Activated CD4-positive, alpha-beta T cell treated with anti-CD3 and anti-CD28 coated beads, Interleukin-2, amount 10 ng/mL, durations not matched to agents 7 days and 5 days (primary cell): ENCODE measurements at regions of chr10 and their contacts with region 1.

Region 1: GRCh38 chr10:69202332-69202731 is 17.8 kb upstream of the HKDC1 start:
- DNase-seq: no peak
- H3K4me3 Mint-ChIP-seq: no peak overlapping the region
- H3K27ac Mint-ChIP-seq: peak overlapping the region; percentile 80
- H3K4me1 Mint-ChIP-seq: peaks cover 51% of the 10 kb centered on the region
- H3K27me3 Mint-ChIP-seq: no peaks in the 10 kb centered on the region

Region 2: GRCh38 chr10:69217119-69217754 is 14.9 kb after region 1 on chr10:
- CTCF ChIA-PET with region 1: interaction called, 15 read pairs
- POLR2A ChIA-PET with region 1: no interaction called
- DNase-seq: no peak
- H3K4me3 Mint-ChIP-seq: no peak overlapping the region
- H3K27ac Mint-ChIP-seq: no peak overlapping the region
- H3K4me1 Mint-ChIP-seq: peaks cover 55% of the 10 kb centered on the region
- H3K27me3 Mint-ChIP-seq: no peaks in the 10 kb centered on the region